Right ventricle myocardium inferior (tissue), 1 donor: ENCODE measurements at regions of chr11 and their contacts with region 1.

Region 1: GRCh38 chr11:65961232-65961901 is at the start of gene SART1:
- DNase-seq: peak; percentile 99
- ATAC-seq: peak; percentile 99
- total RNA-seq, gene SART1: 29.9 TPM

Region 2: GRCh38 chr11:65888163-65888814 is 73.1 kb before region 1 on chr11 and contains the start of gene FIBP:
- intact Hi-C with region 1: loop called (anchors 1 kb)
- DNase-seq: peak; percentile 99
- ATAC-seq: peak; percentile 88
- total RNA-seq, gene FIBP: 44.7 TPM

Region 3: DNA sequence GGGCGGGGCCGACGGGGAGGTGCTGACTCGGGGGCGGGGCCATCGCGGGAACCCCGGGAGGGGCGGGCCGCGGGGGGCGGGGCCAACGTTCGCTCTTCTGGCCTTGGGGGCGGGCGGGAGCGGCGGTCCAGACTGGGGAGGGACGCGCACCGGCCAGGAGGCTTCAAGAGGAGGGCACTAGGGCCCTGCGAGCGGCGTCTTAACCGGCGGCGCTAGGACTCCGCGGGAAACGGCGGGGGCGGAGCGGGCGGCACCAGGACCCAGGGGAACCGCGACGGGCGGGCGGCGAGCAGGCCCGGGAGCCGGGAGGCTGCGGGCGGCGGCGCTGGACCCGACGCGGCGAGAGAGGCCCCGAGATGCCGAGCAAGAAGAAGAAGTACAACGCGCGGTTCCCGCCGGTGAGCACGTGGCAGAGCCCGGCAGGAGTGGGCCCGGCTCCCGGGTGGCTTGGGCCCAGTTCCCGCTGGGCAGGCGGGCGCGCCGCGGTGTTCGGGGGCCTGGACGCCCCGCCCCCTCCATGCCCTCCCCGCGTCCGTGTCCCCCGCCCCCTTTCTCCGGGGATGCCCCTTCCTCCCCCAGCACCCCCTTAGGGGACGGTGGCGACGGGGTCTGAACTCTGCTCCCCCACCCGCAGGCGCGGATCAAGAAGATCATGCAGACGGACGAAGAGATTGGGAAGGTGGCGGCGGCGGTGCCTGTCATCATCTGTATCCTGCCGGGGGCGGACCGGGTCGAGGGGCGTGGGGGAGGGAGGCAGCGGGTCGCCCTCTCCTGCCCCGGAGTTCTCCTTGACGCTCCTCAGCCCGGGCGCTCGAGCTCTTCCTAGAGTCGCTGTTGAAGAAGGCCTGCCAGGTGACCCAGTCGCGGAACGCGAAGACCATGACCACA is 42.0 kb before region 1 on chr11 and contains the start of gene DRAP1:
- intact Hi-C with region 1: loop called (anchors 1 kb)
- DNase-seq: peak; percentile 100
- ATAC-seq: peak; percentile 96
- total RNA-seq, gene DRAP1: 110 TPM

Region 4: GRCh38 chr11:66001942-66002647 is 40.7 kb after region 1 on chr11 and contains the starts of genes BANF1 and EIF1AD:
- intact Hi-C with region 1: loop called (anchors 1 kb)
- DNase-seq: peak; percentile 93
- ATAC-seq: peak; percentile 93
- total RNA-seq, gene BANF1: 248 TPM
- total RNA-seq, gene EIF1AD: 18.0 TPM